Naive thymus-derived CD4-positive, alpha-beta T cell (primary cell): ENCODE measurements at regions of chr4 and their contacts with region 1.

Region 1: DNA sequence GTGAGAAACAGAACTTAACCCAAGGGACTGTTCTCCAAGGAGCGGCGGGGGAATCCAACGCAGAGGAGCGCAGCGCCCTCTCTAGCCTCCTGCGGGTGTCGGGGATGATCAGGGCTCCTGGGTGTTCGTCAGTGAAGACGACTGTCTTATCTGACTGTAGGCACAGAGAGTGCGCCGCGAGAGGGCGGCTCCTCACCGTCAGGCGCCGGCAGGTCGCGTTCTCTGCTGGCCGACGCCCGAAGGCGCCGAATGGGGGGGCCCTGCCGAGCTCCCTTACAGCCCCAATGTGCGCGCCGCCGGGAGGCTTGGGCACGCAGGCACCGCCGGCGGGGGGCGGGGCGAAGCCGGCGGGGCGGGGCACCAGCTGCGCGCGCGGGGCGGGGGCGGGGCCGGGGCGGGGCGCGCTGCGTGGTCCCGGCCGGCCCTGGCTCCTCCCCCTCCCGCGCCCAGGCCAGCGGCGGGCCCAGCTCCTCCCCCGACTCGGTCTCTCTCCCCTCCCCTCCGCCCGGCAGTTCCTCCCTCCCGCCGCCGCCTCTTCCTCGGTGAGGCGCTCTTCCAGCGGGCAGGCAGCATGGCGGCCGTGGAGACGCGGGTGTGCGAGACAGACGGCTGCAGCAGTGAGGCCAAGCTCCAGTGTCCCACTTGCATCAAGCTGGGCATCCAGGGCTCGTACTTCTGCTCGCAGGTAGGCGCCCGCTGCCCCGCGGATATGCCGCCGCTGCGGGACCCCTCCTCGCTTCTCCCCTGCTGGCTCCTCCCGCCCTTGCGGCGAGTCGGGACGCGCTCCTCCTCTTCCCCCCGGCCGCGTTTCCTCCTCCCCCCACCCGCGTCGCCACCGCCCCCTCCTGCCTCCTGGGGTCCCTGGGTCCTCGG is at the start of gene METAP1:
- DNase-seq: peak; percentile 94 to 97 (median 96)
- ATAC-seq: peak; percentile 90
- H3K4me3 ChIP-seq: peak within 1 kb of the TSS; percentile 91
- H3K4me3 Mint-ChIP-seq: peak within 1 kb of the TSS; percentile 79 to 98 (median 94)
- H3K27ac ChIP-seq: peak within 1 kb of the TSS; percentile 92
- H3K27ac Mint-ChIP-seq: peak within 1 kb of the TSS; percentile 97 to 99 (median 99)
- H3K4me1 ChIP-seq: peaks cover 10 to 13% of the 10 kb centered on the region in 2 donors
- H3K4me1 Mint-ChIP-seq: peaks cover 28 to 49% (median 42%) of the 10 kb centered on the region in 7 donors
- H3K27me3 ChIP-seq: no peaks in the 10 kb centered on the region
- H3K27me3 Mint-ChIP-seq: no peaks in the 10 kb centered on the region
- total RNA-seq, gene METAP1: 29.1 to 50.7 (median 40.2) TPM

Region 2: DNA sequence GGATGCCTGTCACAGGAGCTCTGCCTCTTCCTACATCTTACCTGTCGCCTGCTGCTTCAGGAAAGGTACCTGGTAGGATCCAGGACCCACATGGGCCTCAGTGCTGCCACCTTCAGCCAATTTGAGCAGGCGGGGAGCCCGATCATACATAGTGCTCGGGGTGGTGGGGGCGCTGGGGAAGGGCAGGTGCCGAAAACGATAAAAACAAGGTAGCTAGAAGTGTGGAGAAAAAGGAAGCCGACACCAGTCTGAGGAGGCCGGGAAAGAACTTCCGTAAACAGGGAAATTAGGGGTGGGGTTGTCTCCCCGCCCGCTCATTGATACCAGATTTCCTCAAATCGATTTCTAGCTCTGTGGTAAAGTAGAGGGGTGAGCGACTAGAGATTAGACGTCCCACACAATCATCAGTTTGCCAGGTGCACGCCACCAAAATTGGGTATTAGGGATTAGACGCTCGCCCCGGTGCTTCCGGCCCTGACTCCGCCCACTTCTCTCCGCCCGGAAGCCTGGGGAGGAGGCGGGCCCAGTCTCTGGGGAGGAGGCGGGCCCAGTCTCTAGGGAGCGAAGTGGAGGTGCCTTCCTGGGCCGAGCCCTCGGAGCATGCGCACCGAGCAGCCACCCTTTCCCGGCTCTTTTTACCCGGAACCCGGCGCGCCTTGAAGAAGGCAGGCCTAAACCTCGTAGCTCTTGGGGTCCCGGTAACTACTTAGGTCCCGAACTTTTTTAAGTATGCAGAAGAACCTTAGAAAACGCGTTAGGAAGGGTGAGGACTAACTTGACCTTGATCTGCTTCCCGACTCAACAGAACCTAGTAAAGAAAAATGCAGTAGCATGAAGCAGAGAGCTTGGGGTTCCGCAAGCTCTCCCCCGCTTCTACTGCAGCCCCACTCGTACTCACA is 852.2 kb before region 1 on chr4 and contains the start of gene STPG2:
- CTCF ChIA-PET with region 1: no interaction called
- POLR2A ChIA-PET with region 1: interaction called, 8 read pairs
- intact Hi-C with region 1: loop called (anchors 1 kb)
- DNase-seq: peak; percentile 85 to 93 (median 91)
- ATAC-seq: peak; percentile 100
- H3K4me3 ChIP-seq: peak within 1 kb of the TSS; percentile 85
- H3K4me3 Mint-ChIP-seq: peak within 1 kb of the TSS; percentile 87 to 99 (median 94)
- H3K27ac ChIP-seq: peak within 1 kb of the TSS; percentile 84
- H3K27ac Mint-ChIP-seq: peak within 1 kb of the TSS; percentile 96 to 99 (median 98)
- H3K4me1 ChIP-seq: peaks cover 6 to 10% of the 10 kb centered on the region in 2 donors
- H3K4me1 Mint-ChIP-seq: peaks cover 12 to 28% (median 24%) of the 10 kb centered on the region in 7 donors
- H3K27me3 ChIP-seq: no peaks in the 10 kb centered on the region
- H3K27me3 Mint-ChIP-seq: peaks cover 0 to 16% (median 0%) of the 10 kb centered on the region in 5 donors
- total RNA-seq, gene STPG2: 0.19 to 0.47 (median 0.30) TPM in 4 of 5 experiments, not detected in the other

Region 3: DNA sequence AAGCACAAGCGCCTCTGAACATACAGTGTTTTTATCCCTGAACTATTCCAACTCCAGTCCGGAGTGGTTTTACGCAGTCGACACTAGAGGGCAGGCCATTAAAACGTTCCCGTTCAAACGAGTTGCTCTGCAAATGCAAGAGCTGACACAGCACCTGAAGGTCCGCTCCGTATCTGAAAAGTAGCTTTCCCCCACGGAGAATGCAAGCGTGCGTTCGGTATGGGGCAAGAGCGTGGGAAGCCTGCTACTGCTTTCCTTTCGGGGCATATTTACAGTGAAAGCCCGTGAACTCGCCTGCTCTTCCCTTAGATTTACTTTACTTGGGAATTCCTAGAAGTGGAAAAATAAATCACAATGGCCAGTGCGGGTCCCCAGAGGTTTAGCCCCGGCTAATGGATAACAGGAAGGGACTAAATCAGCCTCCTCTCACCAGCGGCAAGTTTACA is 527.8 kb before region 1 on chr4:
- CTCF ChIA-PET with region 1: interaction called, 6 read pairs
- POLR2A ChIA-PET with region 1: interaction called, 3 read pairs
- intact Hi-C with region 1: loop called (anchors 1 kb)
- DNase-seq: peak; percentile 14 to 76 (median 65)
- ATAC-seq: peak; percentile 93
- H3K4me3 ChIP-seq: peak overlapping the region; percentile 11
- H3K4me3 Mint-ChIP-seq: peak overlapping the region; percentile 66 to 87 (median 74)
- H3K27ac ChIP-seq: no peak overlapping the region
- H3K27ac Mint-ChIP-seq: peak overlapping the region in 3 of 9 donors; percentile 24 to 34 (median 32)
- H3K4me1 ChIP-seq: no peaks in the 10 kb centered on the region
- H3K4me1 Mint-ChIP-seq: peaks cover 7 to 40% (median 24%) of the 10 kb centered on the region in 7 donors
- H3K27me3 ChIP-seq: no peaks in the 10 kb centered on the region
- H3K27me3 Mint-ChIP-seq: no peaks in the 10 kb centered on the region

Region 4: DNA sequence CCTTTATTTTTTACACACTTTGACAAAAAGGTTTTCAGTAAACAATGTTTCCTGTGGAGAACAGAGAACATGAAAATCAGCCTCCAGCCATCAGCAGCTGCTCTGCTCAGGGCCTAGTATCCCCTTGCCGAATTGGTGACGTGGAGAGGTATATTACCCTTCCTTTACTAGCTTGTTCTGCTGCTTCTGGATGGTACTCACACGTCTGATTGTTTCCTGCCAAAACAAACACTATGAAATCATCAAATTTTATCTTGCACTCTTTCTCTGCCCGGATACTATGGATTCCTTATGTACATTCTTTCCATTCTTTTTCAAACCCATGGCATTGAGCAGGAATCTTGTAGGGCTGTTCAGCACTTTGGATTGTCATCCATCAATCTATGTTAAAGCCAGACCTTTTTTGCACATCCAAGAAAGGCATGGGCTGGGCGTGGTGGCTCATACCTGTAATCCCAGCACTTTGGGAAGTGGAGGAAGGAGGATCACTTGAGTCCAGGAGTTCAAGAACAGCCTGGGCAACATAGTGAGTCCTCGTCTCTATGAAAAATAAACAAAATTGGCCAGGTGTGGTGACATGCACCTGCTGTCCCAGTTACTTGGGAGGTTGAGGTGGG is 18.6 kb before region 1 on chr4:
- CTCF ChIA-PET with region 1: interaction called, 10 read pairs
- POLR2A ChIA-PET with region 1: interaction called, 4 read pairs
- intact Hi-C with region 1: no loop called
- DNase-seq: no peak
- ATAC-seq: no peak
- H3K4me3 ChIP-seq: no peak overlapping the region
- H3K4me3 Mint-ChIP-seq: no peak overlapping the region
- H3K27ac ChIP-seq: no peak overlapping the region
- H3K27ac Mint-ChIP-seq: no peak overlapping the region
- H3K4me1 ChIP-seq: no peaks in the 10 kb centered on the region
- H3K4me1 Mint-ChIP-seq: peaks cover 0 to 1% (median 0%) of the 10 kb centered on the region in 7 donors
- H3K27me3 ChIP-seq: no peaks in the 10 kb centered on the region
- H3K27me3 Mint-ChIP-seq: peaks cover 0 to 22% (median 4%) of the 10 kb centered on the region in 5 donors

Region 5: GRCh38 chr4:99088481-99089365 is 93.3 kb after region 1 on chr4 and contains the start of gene ADH5:
- CTCF ChIA-PET with region 1: interaction called, 4 read pairs
- POLR2A ChIA-PET with region 1: interaction called, 46 read pairs
- intact Hi-C with region 1: loop called (anchors 1 kb)
- DNase-seq: peak; percentile 75 to 90 (median 85)
- ATAC-seq: peak; percentile 98
- H3K4me3 ChIP-seq: peak within 1 kb of the TSS; percentile 98
- H3K4me3 Mint-ChIP-seq: peak within 1 kb of the TSS; percentile 93 to 99 (median 98)
- H3K27ac ChIP-seq: peak within 1 kb of the TSS; percentile 85
- H3K27ac Mint-ChIP-seq: peak within 1 kb of the TSS; percentile 94 to 99 (median 98)
- H3K4me1 ChIP-seq: peaks cover 8 to 9% of the 10 kb centered on the region in 2 donors
- H3K4me1 Mint-ChIP-seq: peaks cover 28 to 67% (median 57%) of the 10 kb centered on the region in 7 donors
- H3K27me3 ChIP-seq: no peaks in the 10 kb centered on the region
- H3K27me3 Mint-ChIP-seq: peaks cover 0 to 11% (median 0%) of the 10 kb centered on the region in 5 donors
- total RNA-seq, gene ADH5: 42.7 to 102 (median 74.0) TPM

Region 6: DNA sequence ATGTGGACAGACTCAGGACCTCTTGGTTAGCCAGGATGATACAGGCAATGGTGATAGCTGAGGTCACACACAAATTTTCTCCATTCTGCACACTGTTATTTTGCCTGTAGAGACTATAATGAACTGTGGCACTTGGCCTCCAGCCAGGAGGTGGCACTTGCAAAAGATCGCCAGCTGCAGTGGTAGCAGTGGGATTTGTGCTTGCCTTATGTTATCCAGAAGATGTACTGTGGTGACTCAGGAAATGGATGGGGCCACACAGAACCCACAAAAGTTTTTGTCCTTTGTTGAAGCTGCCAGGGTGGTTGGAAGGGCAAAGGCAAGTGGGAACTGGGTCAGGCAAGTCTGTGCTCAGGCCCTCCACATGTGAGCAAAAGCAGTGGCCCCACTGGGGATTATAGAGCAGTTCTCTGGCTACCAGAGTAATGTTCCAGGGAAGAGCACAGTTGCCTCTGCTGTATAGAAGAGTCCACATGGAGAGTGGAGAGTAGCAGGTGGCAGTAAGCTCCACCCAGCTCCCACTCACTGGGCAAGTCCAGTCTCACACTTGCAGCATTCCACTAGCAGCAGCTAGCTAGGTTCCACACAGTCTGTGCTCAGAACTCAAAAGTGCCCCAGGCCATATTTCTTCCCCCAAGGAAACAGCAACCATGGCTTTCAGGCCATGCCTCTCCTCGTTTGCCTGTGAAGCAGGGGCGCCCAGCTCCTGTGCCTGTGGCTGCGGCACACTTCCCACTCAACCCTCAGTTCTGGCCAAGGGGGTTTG is 509.6 kb after region 1 on chr4:
- CTCF ChIA-PET with region 1: no interaction called
- POLR2A ChIA-PET with region 1: no interaction called
- intact Hi-C with region 1: loop called in 1 of 2 experiments (anchors 1 kb)
- DNase-seq: no peak
- ATAC-seq: no peak
- H3K4me3 ChIP-seq: no peak overlapping the region
- H3K4me3 Mint-ChIP-seq: peak overlapping the region in 3 of 10 donors; percentile 14 to 76 (median 56)
- H3K27ac ChIP-seq: no peak overlapping the region
- H3K27ac Mint-ChIP-seq: peak overlapping the region in 8 of 9 donors; percentile 14 to 91 (median 40)
- H3K4me1 ChIP-seq: peaks cover 8 to 33% of the 10 kb centered on the region in 2 donors
- H3K4me1 Mint-ChIP-seq: peaks cover 31 to 63% (median 57%) of the 10 kb centered on the region in 7 donors
- H3K27me3 ChIP-seq: no peaks in the 10 kb centered on the region
- H3K27me3 Mint-ChIP-seq: peaks cover 0 to 2% (median 0%) of the 10 kb centered on the region in 5 donors

Region 7: DNA sequence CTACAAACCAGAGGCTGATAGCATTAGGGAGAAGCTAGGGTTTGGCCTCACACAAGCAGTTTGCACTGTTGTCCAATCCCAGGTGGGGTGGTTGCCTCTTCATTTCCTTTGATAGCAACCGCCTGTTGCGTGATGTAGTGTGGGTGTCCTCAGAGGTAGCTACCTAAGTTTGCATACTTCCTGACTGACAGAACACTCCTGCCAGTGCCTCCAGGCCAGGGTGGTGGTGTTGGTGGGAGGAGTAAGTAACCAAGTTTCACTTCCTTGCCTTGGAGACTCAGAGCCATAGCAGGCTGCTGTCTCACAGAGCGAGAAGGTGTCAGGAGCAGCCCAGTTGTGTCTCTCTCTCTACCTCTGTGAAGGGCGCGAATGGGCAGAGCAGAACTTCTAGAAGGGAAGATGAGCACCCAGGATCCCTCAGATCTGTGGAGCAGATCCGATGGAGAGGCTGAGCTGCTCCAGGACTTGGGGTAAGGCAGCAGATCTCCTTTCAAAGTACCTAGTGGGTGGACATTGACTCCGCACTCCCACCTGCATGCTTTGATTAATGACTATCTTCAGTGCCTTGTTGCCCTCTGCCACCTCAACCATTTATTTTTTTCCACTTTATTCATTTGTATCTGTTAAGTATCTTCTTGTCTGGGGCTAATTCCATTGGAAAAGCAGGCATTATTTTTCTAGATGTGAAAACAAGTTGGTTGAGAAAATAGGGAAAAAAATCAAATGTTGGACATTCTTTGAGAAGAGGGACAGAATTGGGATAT is 821.3 kb after region 1 on chr4 and contains the start of gene DAPP1:
- CTCF ChIA-PET with region 1: no interaction called
- POLR2A ChIA-PET with region 1: no interaction called
- intact Hi-C with region 1: loop called in 1 of 2 experiments (anchors 5 kb)
- DNase-seq: peak; percentile 44 to 88 (median 84)
- ATAC-seq: peak; percentile 95
- H3K4me3 ChIP-seq: peak within 1 kb of the TSS; percentile 71
- H3K4me3 Mint-ChIP-seq: peak within 1 kb of the TSS; percentile 71 to 95 (median 92)
- H3K27ac ChIP-seq: peak within 1 kb of the TSS; percentile 77
- H3K27ac Mint-ChIP-seq: peak within 1 kb of the TSS; percentile 87 to 98 (median 96)
- H3K4me1 ChIP-seq: peaks cover 16 to 32% of the 10 kb centered on the region in 2 donors
- H3K4me1 Mint-ChIP-seq: peaks cover 41 to 72% (median 63%) of the 10 kb centered on the region in 7 donors
- H3K27me3 ChIP-seq: no peaks in the 10 kb centered on the region
- H3K27me3 Mint-ChIP-seq: no peaks in the 10 kb centered on the region
- total RNA-seq, gene DAPP1: 10.9 to 49.6 (median 20.7) TPM